Heart right ventricle (tissue), 16 donors: ENCODE measurements at regions of chr5 and their contacts with region 1.

Region 1: DNA sequence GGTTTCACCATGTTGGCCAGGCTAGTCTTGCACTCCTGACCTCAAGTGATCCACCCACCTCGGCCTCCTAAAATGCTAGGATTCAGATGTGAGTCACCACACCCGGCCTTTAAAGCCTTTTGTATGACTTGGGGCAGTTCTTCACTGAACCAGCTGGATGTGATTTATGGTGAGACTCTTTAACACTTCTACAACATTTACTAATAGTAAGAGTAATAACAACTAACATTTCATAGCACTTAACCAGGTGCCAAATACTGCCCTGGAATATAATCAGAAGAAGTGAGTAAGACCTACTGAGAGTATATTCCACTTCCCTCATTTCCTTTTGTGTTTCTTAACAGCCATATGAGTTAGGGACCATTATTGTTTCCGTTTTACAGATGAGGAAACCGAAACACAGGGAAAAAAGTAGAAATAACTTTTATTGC is 10.0 kb downstream of the ZSWIM6 start:
- DNase-seq: no peak
- ATAC-seq: no peak
- H3K4me3 ChIP-seq: no peak overlapping the region
- H3K27ac ChIP-seq: no peak overlapping the region
- H3K4me1 ChIP-seq: peaks cover 0 to 84% (median 24%) of the 10 kb centered on the region in 9 donors
- H3K27me3 ChIP-seq: no peaks in the 10 kb centered on the region
- CTCF ChIP-seq: no peak

Region 2: GRCh38 chr5:61394078-61394704 is 52.1 kb after region 1 on chr5:
- intact Hi-C with region 1: loop called in 2 of 10 experiments (anchors 5 to 10 kb)
- DNase-seq: no peak
- ATAC-seq: peak in 2 of 8 donors; percentile 37 to 59
- H3K4me3 ChIP-seq: no peak overlapping the region
- H3K27ac ChIP-seq: no peak overlapping the region
- H3K4me1 ChIP-seq: peaks cover 0 to 17% (median 7%) of the 10 kb centered on the region in 9 donors
- H3K27me3 ChIP-seq: no peaks in the 10 kb centered on the region
- CTCF ChIP-seq: no peak

Region 3: GRCh38 chr5:61496860-61497259 is 154.8 kb after region 1 on chr5:
- intact Hi-C with region 1: loop called in 1 of 10 experiments (anchors 10 kb)
- DNase-seq: no peak
- ATAC-seq: peak in 3 of 8 donors; percentile 30 to 57 (median 42)
- H3K4me3 ChIP-seq: no peak overlapping the region
- H3K27ac ChIP-seq: no peak overlapping the region
- H3K4me1 ChIP-seq: peaks cover 0 to 14% (median 6%) of the 10 kb centered on the region in 9 donors
- H3K27me3 ChIP-seq: no peaks in the 10 kb centered on the region
- CTCF ChIP-seq: no peak

Region 4: GRCh38 chr5:62909331-62909730 is 1567.2 kb after region 1 on chr5:
- intact Hi-C with region 1: no loop called
- DNase-seq: no peak
- ATAC-seq: no peak
- H3K4me3 ChIP-seq: no peak overlapping the region
- H3K27ac ChIP-seq: no peak overlapping the region
- H3K4me1 ChIP-seq: no peaks in the 10 kb centered on the region
- H3K27me3 ChIP-seq: no peaks in the 10 kb centered on the region
- CTCF ChIP-seq: no peak